CD4-positive, alpha-beta memory T cell (primary cell): ENCODE measurements at regions of chr2 and their contacts with region 1.

Region 1: GRCh38 chr2:137123226-137123625 is 357.9 kb downstream of the THSD7B start:
- DNase-seq: no peak
- H3K4me3 ChIP-seq: no peak overlapping the region
- H3K4me3 Mint-ChIP-seq: no peak overlapping the region
- H3K27ac ChIP-seq: no peak overlapping the region
- H3K27ac Mint-ChIP-seq: no peak overlapping the region
- H3K4me1 ChIP-seq: no peaks in the 10 kb centered on the region
- H3K4me1 Mint-ChIP-seq: no peaks in the 10 kb centered on the region
- H3K27me3 ChIP-seq: no peaks in the 10 kb centered on the region
- H3K27me3 Mint-ChIP-seq: no peaks in the 10 kb centered on the region

Region 2: DNA sequence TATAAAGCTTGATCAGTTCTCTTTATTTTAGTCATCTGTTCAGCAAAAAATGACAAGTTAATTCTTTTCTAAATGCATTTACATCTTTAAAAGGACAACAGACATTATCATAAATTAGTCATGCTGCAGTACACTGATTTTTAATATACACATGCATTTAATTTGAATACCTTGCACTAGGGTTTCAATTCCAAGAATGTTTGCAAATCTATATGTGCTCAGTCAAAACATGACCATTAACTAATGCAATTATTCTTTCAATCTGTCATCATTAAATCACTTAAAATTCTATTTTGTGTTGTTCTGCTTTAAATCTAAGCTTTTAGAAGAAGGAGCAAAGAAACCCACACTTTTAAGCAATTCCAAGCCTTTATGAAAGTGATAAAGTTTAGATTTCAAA is 15.3 kb before region 1 on chr2:
- CTCF ChIA-PET with region 1: no interaction called
- POLR2A ChIA-PET with region 1: no interaction called
- intact Hi-C with region 1: no loop called
- DNase-seq: no peak
- H3K4me3 ChIP-seq: no peak overlapping the region
- H3K4me3 Mint-ChIP-seq: no peak overlapping the region
- H3K27ac ChIP-seq: no peak overlapping the region
- H3K27ac Mint-ChIP-seq: no peak overlapping the region
- H3K4me1 ChIP-seq: no peaks in the 10 kb centered on the region
- H3K4me1 Mint-ChIP-seq: no peaks in the 10 kb centered on the region
- H3K27me3 ChIP-seq: no peaks in the 10 kb centered on the region
- H3K27me3 Mint-ChIP-seq: no peaks in the 10 kb centered on the region

Region 3: GRCh38 chr2:137138263-137138662 is 15.0 kb after region 1 on chr2:
- CTCF ChIA-PET with region 1: no interaction called
- POLR2A ChIA-PET with region 1: no interaction called
- intact Hi-C with region 1: loop called (anchors 1 kb)
- DNase-seq: no peak
- H3K4me3 ChIP-seq: no peak overlapping the region
- H3K4me3 Mint-ChIP-seq: no peak overlapping the region
- H3K27ac ChIP-seq: no peak overlapping the region
- H3K27ac Mint-ChIP-seq: no peak overlapping the region
- H3K4me1 ChIP-seq: no peaks in the 10 kb centered on the region
- H3K4me1 Mint-ChIP-seq: no peaks in the 10 kb centered on the region
- H3K27me3 ChIP-seq: no peaks in the 10 kb centered on the region
- H3K27me3 Mint-ChIP-seq: no peaks in the 10 kb centered on the region